ENCODE measurements at regions of chr3 and their contacts with region 1.

Region 1: DNA sequence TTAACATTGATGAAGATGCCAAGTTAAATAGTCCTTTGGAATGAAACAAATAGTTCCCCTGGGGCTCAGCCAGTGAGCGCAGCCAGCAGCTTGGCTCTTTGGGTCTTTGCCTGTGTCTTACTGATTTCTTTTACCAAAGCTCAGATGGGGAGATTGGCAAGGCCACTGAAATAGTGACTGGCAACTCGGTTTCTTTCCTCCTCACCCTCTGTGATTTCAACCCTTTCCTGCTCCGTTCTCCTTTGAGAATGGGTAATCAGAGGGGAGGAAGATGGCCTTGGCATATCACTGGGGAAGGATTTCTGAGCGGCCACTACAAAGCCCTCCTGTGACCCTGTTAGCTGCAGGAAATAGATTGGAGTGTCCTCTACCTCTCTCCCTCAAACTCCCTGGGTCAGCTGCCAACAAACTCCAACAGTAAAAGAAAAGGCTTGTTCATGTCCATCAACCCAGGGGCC is 337.1 kb upstream of the LRRFIP2 start:
- DNase-seq: peak in 1 of 2 donors; percentile 72
- ATAC-seq: peak; percentile 39 to 65 (median 61)
- H3K4me3 ChIP-seq: no peak overlapping the region
- H3K27ac ChIP-seq: peak overlapping the region; percentile 50 to 90 (median 80)
- H3K4me1 ChIP-seq: peaks cover 5 to 71% (median 38%) of the 10 kb centered on the region in 9 donors
- H3K27me3 ChIP-seq: no peaks in the 10 kb centered on the region
- CTCF ChIP-seq: no peak

Region 2: DNA sequence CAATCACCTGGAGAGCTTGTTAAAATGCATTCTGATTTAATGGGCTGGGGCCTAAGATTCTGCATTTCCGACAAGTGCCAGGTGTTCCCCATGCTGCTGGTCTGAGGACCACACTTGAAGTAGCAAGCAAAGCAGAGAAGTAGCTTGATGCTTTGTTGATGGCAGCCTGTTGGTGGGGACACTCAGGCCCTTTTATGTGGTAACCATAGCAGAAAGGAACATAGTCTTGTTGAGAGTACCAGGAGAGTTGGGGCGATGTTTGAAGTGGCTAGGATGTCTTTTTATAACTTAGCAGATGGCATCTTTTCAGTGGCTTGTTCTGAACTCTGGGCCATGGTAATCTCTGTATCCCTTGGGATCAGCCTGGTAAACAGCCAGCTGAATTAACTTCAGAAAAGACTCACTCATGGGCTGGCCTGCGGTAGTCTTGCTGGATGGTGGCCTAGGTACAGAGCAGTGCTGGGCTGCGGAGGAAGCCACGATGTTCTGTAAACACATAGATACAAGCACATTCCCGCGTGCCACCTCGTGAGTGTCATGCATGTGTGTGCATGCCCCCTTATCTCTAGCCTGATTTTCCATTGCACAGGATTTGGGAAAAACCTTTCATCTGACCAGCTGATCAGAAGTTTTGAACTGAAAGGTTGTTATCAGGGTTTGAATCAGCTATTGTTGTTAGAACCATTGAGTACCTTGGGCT is 44.7 kb before region 1 on chr3:
- intact Hi-C with region 1: loop called in 1 of 10 experiments (anchors 5 kb)
- DNase-seq: peak in 1 of 2 donors; percentile 14
- ATAC-seq: peak in 7 of 8 donors; percentile 20 to 95 (median 51)
- H3K4me3 ChIP-seq: no peak overlapping the region
- H3K27ac ChIP-seq: peak overlapping the region in 8 of 10 donors; percentile 4 to 65 (median 50)
- H3K4me1 ChIP-seq: peaks cover 15 to 76% (median 37%) of the 10 kb centered on the region in 9 donors
- H3K27me3 ChIP-seq: no peaks in the 10 kb centered on the region
- CTCF ChIP-seq: no peak